GM12878 (cell line): ENCODE measurements at regions of chr1 and their contacts with region 1.

Region 1: GRCh38 chr1:182829285-182829932 is 9.7 kb upstream of the DHX9 start:
- DNase-seq: peak; percentile 21
- ATAC-seq: peak; percentile 95
- H3K4me3 ChIP-seq: peak overlapping the region; percentile 46; the same call in 1 of the 2 replicates
- H3K27ac ChIP-seq: no peak overlapping the region
- H3K4me1 ChIP-seq: no peaks in the 10 kb centered on the region
- H3K27me3 ChIP-seq: no peaks in the 10 kb centered on the region
- CTCF ChIP-seq: no peak
- EP300 ChIP-seq: no peak
- POLR2A ChIP-seq: no peak
- RAD21 ChIP-seq: no peak

Region 2: GRCh38 chr1:182839209-182840065 is 10.0 kb after region 1 on chr1 and contains the start of gene DHX9:
- CTCF ChIA-PET with region 1: interaction called, 6 read pairs
- POLR2A ChIA-PET with region 1: interaction called, 15 read pairs
- RAD21 ChIA-PET with region 1: interaction called, 7 read pairs
- SMC1A ChIA-PET with region 1: interaction called, 13 read pairs
- in situ Hi-C with region 1: no loop called
- intact Hi-C with region 1: no loop called
- DNase-seq: peak; percentile 60
- ATAC-seq: peak; percentile 89
- H3K4me3 ChIP-seq: peak within 1 kb of the TSS; percentile 91
- H3K27ac ChIP-seq: peak within 1 kb of the TSS; percentile 81
- H3K4me1 ChIP-seq: no peaks in the 10 kb centered on the region
- H3K27me3 ChIP-seq: no peaks in the 10 kb centered on the region
- CTCF ChIP-seq: peak in 2 of 3 experiments; percentile 6 to 27; a peak in 2 of 6 replicates
- EP300 ChIP-seq: no peak
- POLR2A ChIP-seq: peak; percentile 98
- RAD21 ChIP-seq: no peak
- polyA plus RNA-seq, gene DHX9: 90.7 to 130 TPM